Activated T-helper 1 cell treated with anti-CD3 and anti-CD28 coated beads, Interleukin-12 subunit alpha, Interleukin-12 subunit beta, Interleukin-2, Interleukin-4 antibody, amounts not matched to agents 30 ng/mL and 10 ng/mL and 1 ng/mL, durations not matched to agents 14 hours and 24 hours and 36 hours (primary cell): ENCODE measurements at regions of chr12 and their contacts with region 1.

Region 1: DNA sequence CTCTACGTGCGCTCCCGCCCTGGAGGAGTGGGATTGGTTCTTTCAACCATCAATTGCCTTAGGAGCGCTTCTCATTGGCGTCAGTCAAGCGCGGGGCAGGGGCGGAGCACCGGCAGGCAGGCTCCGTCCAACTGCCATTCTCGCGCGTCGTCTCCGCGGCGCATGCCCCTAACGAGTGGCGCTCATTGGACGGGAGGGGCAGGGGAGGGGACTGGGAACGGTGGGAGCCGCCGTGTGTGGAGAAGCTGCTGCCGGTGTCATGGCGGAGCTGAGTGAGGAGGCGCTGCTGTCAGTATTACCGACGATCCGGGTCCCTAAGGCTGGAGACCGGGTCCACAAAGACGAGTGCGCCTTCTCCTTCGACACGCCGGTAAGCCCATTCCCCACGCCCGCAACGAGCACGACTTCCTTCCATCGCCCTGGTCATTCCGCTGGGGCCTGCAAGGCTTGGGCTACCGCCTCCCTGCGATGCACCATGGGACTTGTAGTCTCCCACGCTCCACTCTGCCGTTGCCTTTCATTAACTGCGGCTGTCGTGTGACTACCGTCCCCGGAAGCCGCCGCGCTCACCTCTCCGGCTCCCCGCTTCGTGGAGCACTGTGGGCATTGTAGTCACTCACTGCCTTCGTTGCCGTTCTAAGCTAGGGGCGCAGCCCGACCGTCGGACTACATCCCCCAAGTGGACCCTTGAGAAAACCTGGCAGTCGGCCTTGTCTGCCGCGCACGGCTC is at the start of gene USP5:
- DNase-seq: peak; percentile 98
- H3K4me3 Mint-ChIP-seq: peak within 1 kb of the TSS; percentile 91
- H3K27ac Mint-ChIP-seq: peak within 1 kb of the TSS; percentile 96
- H3K4me1 Mint-ChIP-seq: peaks cover 46% of the 10 kb centered on the region
- H3K27me3 Mint-ChIP-seq: peaks cover 2% of the 10 kb centered on the region
- total RNA-seq, gene USP5: 116 and 127 TPM in 2 replicates

Region 2: GRCh38 chr12:6533923-6534694 is 318.0 kb before region 1 on chr12 and contains the start of gene GAPDH:
- intact Hi-C with region 1: loop called (anchors 1 kb)
- DNase-seq: peak; percentile 86
- H3K4me3 Mint-ChIP-seq: peak within 1 kb of the TSS; percentile 91
- H3K27ac Mint-ChIP-seq: peak within 1 kb of the TSS; percentile 99
- H3K4me1 Mint-ChIP-seq: peaks cover 58% of the 10 kb centered on the region
- H3K27me3 Mint-ChIP-seq: no peaks in the 10 kb centered on the region
- total RNA-seq, gene GAPDH: 4,315 and 4,318 TPM in 2 replicates

Region 3: GRCh38 chr12:6688999-6689882 is 162.8 kb before region 1 on chr12 and contains the start of gene ZNF384:
- intact Hi-C with region 1: loop called (anchors 1 kb)
- DNase-seq: peak; percentile 94
- H3K4me3 Mint-ChIP-seq: peak within 1 kb of the TSS; percentile 97
- H3K27ac Mint-ChIP-seq: peak within 1 kb of the TSS; percentile 87
- H3K4me1 Mint-ChIP-seq: peaks cover 58% of the 10 kb centered on the region
- H3K27me3 Mint-ChIP-seq: no peaks in the 10 kb centered on the region
- total RNA-seq, gene ZNF384: 79.6 and 89.8 TPM in 2 replicates

Region 4: GRCh38 chr12:6792522-6793201 is 59.4 kb before region 1 on chr12:
- intact Hi-C with region 1: loop called (anchors 1 kb)
- DNase-seq: peak; percentile 40
- H3K4me3 Mint-ChIP-seq: peak overlapping the region; percentile 94
- H3K27ac Mint-ChIP-seq: peak overlapping the region; percentile 87
- H3K4me1 Mint-ChIP-seq: peaks cover 65% of the 10 kb centered on the region
- H3K27me3 Mint-ChIP-seq: no peaks in the 10 kb centered on the region

Region 5: GRCh38 chr12:6873094-6874014 is 21.3 kb after region 1 on chr12 and contains the start of gene SPSB2:
- intact Hi-C with region 1: loop called (anchors 1 kb)
- DNase-seq: peak; percentile 99
- H3K4me3 Mint-ChIP-seq: peak within 1 kb of the TSS; percentile 96
- H3K27ac Mint-ChIP-seq: peak within 1 kb of the TSS; percentile 86
- H3K4me1 Mint-ChIP-seq: peaks cover 56% of the 10 kb centered on the region
- H3K27me3 Mint-ChIP-seq: no peaks in the 10 kb centered on the region
- total RNA-seq, gene SPSB2: 3.4 and 4.7 TPM in 2 replicates

Region 6: DNA sequence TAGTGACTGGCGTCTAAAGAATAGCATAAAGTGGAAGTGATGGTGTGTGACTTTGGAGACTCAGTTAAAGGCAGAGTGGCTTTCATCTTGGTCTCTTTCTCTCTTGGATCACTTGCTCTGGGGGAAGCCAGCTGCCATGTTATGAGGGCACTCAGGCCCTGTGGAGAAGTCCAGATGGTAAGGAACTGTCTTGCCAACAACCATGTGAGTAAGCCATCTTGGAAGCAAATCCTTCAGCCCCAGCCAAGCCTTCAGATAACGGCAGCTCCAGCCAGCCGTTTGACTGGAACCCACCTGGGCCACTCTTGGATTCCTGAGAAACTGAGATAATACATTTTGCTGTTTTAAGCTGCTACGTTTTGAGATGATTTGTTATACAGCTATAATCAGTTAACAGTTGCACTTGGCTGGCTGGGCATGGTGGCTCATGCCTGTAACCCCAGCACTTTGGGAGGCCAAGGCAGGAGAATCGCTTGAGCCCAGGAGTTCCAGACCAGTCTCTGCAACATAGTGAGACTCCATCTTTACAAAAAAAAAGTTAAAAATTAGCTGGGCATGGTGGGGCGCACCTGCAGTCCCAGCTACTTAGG is 44.9 kb after region 1 on chr12:
- intact Hi-C with region 1: no loop called
- DNase-seq: no peak
- H3K4me3 Mint-ChIP-seq: no peak overlapping the region
- H3K27ac Mint-ChIP-seq: no peak overlapping the region
- H3K4me1 Mint-ChIP-seq: peaks cover 16% of the 10 kb centered on the region
- H3K27me3 Mint-ChIP-seq: no peaks in the 10 kb centered on the region

Region 7: GRCh38 chr12:6965026-6965661 is 113.1 kb after region 1 on chr12:
- intact Hi-C with region 1: loop called (anchors 1 kb)
- DNase-seq: peak; percentile 78
- H3K4me3 Mint-ChIP-seq: no peak overlapping the region
- H3K27ac Mint-ChIP-seq: peak overlapping the region; percentile 90
- H3K4me1 Mint-ChIP-seq: peaks cover 59% of the 10 kb centered on the region
- H3K27me3 Mint-ChIP-seq: no peaks in the 10 kb centered on the region